Activated CD8-positive, alpha-beta T cell treated with anti-CD3 and anti-CD28 coated beads for 36 hours (primary cell): ENCODE measurements at regions of chr3 and their contacts with region 1.

Region 1: DNA sequence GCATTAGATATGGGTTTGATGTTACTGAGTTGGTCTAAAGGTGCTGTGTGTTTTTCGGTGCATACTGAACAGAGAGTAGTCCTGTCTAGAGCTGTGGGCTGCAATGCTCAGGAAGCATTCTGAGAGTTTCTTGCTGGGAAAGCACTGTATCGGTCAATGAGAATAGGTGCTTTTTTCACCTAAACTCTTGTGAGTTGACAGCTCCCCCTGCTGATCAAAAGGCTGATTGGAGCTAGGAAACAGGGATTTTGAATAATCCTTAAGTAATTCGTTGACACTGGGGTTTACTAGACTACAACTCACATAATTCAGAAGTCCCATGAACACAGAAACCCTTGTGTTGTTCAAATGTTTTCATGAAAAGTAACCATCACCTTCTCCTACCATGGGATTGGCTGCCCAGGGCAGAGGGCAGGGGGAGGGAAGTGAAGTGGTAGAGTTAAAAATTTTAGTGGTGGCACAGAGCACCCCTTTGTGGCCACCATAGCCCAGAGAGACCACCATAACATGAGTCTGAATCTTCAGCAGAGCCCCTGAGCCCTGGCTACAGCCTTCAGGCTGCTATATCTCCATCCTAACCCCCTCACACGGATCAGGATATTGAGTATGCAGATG is 13.0 kb upstream of the MANF start:
- DNase-seq: peak; percentile 77
- ATAC-seq: peak; percentile 47
- H3K4me3 Mint-ChIP-seq: no peak overlapping the region
- H3K27ac Mint-ChIP-seq: no peak overlapping the region
- H3K4me1 Mint-ChIP-seq: peaks cover 2% of the 10 kb centered on the region
- H3K27me3 Mint-ChIP-seq: no peaks in the 10 kb centered on the region
- CTCF ChIP-seq: peak; percentile 51

Region 2: DNA sequence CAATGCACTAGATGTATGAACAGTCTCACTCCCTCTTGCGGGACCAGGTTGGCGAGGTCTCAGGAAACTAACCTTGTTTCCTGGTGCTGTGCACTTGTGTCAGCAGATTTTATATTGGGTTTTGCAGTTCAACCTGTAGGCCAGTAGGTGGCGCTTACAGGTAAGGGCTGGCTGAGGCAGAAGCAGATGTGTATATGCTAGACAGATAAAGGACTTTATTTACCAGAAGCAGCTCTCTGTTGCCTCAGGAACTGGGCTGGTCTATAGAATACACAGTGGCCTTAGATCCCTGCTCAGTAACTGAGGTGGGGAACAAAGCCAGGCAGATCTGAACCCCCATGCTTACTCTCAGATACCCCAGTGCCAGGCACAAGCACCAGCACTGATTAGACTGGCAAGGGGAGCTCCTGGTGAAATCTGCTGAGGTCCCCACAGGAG is 400.5 kb before region 1 on chr3:
- CTCF ChIA-PET with region 1: interaction called, 38 read pairs
- POLR2A ChIA-PET with region 1: no interaction called
- intact Hi-C with region 1: loop called (anchors 2 kb)
- DNase-seq: peak; percentile 60
- ATAC-seq: peak; percentile 97
- H3K4me3 Mint-ChIP-seq: no peak overlapping the region
- H3K27ac Mint-ChIP-seq: no peak overlapping the region
- H3K4me1 Mint-ChIP-seq: peaks cover 18% of the 10 kb centered on the region
- H3K27me3 Mint-ChIP-seq: peaks cover 1% of the 10 kb centered on the region
- CTCF ChIP-seq: peak; percentile 90

Region 3: DNA sequence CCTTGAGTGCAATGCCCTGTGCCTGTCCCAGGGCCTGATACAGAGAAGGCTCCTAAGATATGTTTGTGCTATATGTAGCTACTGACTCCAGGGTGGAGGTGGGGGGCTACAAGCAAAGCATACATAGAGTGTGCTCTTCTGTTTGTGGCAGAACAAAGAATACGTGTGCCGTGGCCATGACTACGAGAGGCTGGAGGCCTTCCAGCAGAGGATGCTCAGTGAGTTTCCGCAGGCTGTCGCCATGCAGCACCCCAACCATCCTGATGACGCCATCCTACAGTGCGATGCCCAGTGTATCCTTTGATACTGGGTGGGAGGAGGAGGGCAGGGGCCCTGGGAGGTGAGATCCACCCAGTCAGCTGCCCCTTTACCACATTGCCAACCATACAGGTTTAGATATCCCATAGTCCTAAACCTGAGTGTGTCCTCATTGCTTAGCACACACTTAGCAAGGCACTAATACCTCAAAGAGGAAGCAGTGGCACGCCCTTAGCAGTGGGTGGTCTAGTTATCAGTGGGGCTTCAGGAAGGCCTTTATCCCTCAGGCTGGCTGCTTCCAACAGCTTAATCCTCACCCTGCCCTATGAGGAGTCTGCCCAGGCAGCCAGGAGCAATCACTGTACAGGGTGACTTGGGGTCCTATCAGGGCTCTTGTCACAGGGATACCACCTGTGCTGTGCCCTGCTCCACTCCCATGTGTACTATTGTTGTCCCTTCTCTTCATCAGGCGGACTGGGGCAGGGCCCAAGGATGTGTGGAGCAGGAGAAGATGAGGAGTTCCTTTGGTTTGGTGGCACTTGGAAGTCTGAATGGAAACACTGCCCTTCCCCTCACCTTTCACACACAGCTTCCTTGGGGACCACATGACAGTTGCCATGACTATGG is 17.1 kb before region 1 on chr3:
- CTCF ChIA-PET with region 1: interaction called, 10 read pairs
- POLR2A ChIA-PET with region 1: no interaction called
- intact Hi-C with region 1: no loop called
- DNase-seq: no peak
- ATAC-seq: no peak
- H3K4me3 Mint-ChIP-seq: no peak overlapping the region
- H3K27ac Mint-ChIP-seq: no peak overlapping the region
- H3K4me1 Mint-ChIP-seq: peaks cover 4% of the 10 kb centered on the region
- H3K27me3 Mint-ChIP-seq: no peaks in the 10 kb centered on the region
- CTCF ChIP-seq: no peak

Region 4: DNA sequence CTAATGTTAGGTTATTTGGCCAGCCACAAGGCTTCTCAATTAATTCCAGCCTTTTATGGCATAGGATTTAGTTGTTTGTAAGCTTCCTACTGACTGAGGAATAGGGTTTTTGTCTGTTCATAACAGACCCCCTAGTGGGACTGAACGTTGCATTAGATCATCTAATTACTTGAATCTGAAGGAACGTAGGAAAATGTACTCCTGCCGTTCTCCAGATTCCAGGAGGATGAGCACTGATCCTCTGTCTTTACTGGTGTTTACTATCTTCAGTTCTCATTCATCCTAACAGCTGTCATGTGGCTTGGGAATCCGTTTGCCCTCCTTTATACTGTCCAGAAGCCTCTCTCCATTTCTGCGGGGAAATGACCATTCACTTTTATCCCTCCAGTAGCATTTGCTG is 219.2 kb after region 1 on chr3:
- CTCF ChIA-PET with region 1: no interaction called
- POLR2A ChIA-PET with region 1: no interaction called
- intact Hi-C with region 1: no loop called
- DNase-seq: no peak
- ATAC-seq: no peak
- H3K4me3 Mint-ChIP-seq: no peak overlapping the region
- H3K27ac Mint-ChIP-seq: no peak overlapping the region
- H3K4me1 Mint-ChIP-seq: peaks cover 9% of the 10 kb centered on the region
- H3K27me3 Mint-ChIP-seq: no peaks in the 10 kb centered on the region
- CTCF ChIP-seq: no peak